ENCODE measurements at regions of chr2 and their contacts with region 1.

Region 1: DNA sequence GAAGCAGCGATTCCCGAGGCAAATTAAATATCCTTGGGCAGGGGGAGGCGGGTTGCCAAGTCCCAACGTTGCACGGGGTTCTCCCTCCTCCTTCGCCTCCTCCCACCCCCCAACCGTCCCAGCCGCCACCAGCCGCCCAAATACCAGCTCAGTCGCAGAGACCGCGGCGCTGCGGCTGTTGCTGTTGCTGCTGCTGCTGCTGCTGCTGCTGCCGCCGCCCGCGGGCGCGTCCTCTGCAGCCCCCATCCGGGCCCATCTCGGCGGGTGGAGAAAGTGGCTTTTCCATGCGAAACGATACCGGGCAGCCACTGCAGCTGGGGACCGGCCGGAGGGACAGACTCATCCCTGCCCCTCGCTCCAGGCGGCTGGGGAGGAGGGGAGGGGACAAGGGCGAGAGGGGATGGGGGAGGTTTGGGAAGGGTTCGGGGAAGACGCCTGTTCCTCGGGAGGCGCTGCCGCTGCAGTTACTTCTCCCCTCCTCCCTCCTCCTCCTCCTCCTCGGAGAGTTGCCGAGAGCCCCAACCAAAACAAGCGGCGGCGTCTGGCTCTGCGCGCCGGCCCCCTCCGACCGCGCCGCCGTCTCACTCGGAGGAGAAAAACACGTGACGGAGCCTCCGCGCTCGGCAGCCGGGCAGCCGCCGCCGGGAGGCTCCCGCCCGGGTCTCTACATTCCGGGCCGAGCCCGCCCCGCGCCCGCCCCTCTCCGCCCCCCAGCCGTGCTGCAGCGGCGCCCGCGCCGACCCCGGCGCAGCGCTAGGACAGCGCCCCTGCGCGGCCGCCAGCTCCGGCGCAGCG is at the start of gene IRS1:
- DNase-seq: peak; percentile 88
- H3K4me3 Mint-ChIP-seq: peak within 1 kb of the TSS; percentile 81
- H3K27ac Mint-ChIP-seq: peak within 1 kb of the TSS; percentile 72
- H3K4me1 Mint-ChIP-seq: peaks cover 30% of the 10 kb centered on the region
- H3K27me3 Mint-ChIP-seq: peaks cover 10% of the 10 kb centered on the region
- total RNA-seq, gene IRS1: 4.7 and 4.8 TPM in 2 replicates

Region 2: GRCh38 chr2:225889446-225889850 is 909.9 kb before region 1 on chr2:
- intact Hi-C with region 1: loop called (anchors 1 kb)
- DNase-seq: no peak
- H3K4me3 Mint-ChIP-seq: no peak overlapping the region
- H3K27ac Mint-ChIP-seq: no peak overlapping the region
- H3K4me1 Mint-ChIP-seq: no peaks in the 10 kb centered on the region
- H3K27me3 Mint-ChIP-seq: peaks cover 4% of the 10 kb centered on the region

Region 3: DNA sequence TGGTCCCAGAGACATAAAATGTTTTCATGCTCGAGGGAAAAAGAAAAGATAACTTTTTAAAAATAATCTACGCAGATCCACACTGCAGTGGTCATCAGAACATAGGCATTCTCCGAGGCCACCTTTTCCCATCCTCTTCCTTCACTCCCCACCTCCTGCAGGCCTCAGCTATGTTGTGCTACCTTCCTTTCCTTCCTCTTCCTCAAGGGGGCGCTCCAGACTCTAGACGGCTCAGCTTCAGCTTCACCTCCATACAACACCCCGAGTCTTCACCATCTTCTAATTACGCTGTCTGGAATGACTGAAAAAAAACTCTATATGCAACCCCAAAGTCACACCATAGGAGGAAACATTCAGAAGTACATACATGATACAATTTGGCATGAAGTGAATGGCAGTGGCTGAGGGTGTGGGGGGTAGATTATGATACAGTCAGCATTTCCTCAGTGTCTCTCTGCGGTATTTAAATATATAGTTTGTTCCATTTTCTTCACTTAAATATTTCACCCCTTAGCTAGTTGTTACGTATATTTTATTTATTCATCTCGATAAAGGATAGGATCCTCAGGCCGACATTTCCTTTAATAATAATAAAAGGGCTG is 583.4 kb before region 1 on chr2:
- intact Hi-C with region 1: loop called (anchors 1 kb)
- DNase-seq: peak; percentile 89
- H3K4me3 Mint-ChIP-seq: no peak overlapping the region
- H3K27ac Mint-ChIP-seq: no peak overlapping the region
- H3K4me1 Mint-ChIP-seq: peaks cover 4% of the 10 kb centered on the region
- H3K27me3 Mint-ChIP-seq: peaks cover 7% of the 10 kb centered on the region

Region 4: DNA sequence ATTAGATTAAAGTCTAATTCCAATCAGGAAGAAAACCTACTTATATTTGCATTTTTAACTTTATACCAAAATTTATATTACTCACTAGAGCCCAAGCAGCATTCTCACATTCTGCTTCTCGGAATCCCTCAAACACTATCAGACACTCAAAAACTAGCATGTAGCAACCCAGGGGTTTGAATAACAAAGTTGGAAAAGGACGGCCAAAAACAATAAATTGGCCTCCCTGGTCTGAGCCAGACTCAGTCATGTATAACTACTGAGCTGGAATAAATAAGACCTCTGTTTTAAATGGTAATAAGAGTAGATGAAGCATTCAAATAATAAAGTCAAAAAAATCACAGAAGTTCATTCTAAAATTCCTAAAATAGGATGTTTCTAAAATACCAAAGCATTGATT is 290.7 kb before region 1 on chr2:
- intact Hi-C with region 1: loop called (anchors 10 kb)
- DNase-seq: no peak
- H3K4me3 Mint-ChIP-seq: no peak overlapping the region
- H3K27ac Mint-ChIP-seq: no peak overlapping the region
- H3K4me1 Mint-ChIP-seq: no peaks in the 10 kb centered on the region
- H3K27me3 Mint-ChIP-seq: peaks cover 4% of the 10 kb centered on the region

Region 5: DNA sequence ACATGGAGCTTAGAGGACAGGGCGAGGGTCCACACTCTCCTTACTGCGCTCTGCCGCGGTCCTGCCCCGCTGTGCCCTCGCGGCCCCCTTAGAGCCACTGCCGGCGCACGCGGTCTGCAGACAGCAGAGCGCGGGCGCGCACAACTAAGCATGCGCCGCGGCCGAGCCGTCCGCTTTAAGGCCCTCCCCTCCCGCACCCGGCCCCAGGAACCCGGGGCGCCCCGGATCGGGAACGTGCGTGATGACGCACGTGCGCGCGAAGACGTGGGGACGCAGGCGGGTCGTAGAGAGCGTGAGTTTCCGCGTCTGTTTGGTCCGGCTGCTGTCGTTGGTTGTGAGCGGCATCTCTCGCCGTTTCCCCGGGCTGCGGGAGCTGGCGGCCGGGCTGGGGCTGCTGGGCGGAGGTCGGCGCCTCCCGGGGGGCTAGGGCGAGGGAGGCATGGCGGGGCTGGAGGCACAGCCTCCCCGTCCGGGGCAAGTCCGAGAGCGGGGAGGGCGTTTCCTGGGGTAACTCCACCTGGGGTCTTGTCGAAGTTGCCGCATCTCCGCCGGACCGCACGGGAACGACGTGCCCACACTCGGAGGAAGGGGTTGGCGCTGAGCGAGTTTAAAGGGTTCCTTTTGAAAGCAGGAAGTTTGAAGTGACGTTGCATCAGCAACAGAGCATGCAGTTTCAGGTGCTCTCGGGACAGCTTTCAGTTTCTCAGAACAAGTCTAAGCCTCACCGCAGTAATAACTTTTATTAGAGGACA is 36.6 kb after region 1 on chr2 and contains the start of gene RHBDD1:
- intact Hi-C with region 1: loop called (anchors 1 kb)
- DNase-seq: peak; percentile 98
- H3K4me3 Mint-ChIP-seq: peak within 1 kb of the TSS; percentile 95
- H3K27ac Mint-ChIP-seq: peak within 1 kb of the TSS; percentile 97
- H3K4me1 Mint-ChIP-seq: peaks cover 54% of the 10 kb centered on the region
- H3K27me3 Mint-ChIP-seq: no peaks in the 10 kb centered on the region
- total RNA-seq, gene RHBDD1: 41.3 and 44.7 TPM in 2 replicates

Region 6: DNA sequence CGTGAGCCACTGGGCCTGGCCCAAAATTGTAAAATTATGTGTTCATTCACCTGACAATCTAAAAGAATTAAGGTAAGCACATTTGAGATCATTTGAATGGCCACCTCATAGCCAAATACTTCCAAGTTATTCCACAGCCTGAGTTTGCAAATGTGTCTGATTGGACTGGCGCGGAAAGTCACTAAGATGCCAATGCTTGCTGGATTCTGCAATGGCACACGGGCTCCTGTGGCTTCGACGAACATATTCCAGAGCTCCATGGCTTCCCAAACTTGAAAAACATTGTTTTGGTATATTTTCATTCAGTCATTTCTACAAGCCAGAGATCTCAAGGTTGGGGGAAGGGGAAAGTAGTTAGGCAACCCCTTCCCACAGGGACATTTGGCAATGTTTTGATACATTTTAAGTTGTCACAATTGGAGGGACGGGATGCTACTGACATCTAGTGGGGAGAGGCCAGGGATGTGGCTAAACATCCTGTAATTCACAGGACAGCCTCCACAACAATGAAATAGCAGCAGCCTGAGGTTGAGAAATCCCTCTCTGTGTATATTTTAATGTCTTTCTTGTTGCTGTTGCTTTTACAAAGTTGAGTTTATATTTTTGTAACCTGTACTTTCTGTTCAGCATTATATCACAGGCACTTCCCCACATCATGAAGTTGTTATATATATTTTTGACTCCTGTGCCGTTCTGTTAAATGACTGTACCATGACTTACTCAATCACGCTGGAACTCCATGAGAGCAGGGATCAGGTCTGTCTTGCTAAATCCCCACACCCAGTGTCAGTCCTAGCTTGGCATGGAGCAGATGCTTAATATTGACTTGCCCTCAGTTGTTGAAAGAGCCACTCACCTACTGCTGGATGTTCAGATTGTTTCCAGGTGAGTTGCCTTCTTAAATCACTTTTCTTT is 307.7 kb after region 1 on chr2:
- intact Hi-C with region 1: loop called (anchors 5 kb)
- DNase-seq: peak; percentile 77
- H3K4me3 Mint-ChIP-seq: no peak overlapping the region
- H3K27ac Mint-ChIP-seq: no peak overlapping the region
- H3K4me1 Mint-ChIP-seq: no peaks in the 10 kb centered on the region
- H3K27me3 Mint-ChIP-seq: peaks cover 3% of the 10 kb centered on the region

Region 7: DNA sequence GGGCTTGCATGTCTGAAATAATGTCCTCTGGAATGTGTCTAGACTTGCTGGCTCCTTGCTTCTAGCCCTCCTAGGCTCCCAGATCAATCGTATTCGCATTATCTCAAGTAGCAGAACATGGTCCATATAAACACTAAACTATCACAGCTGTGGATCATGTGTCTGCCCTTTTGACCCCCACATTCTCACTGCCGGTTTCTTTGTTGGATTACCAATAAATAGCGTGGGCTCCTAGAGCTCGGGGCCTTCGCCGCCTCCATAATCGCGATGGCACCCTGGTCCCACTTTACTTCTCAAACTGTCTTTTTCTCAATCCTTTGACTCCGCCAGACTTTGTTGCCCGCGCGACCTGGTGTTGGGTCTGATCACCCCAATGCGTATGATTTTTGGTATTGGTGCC is 940.0 kb after region 1 on chr2:
- intact Hi-C with region 1: no loop called
- DNase-seq: no peak
- H3K4me3 Mint-ChIP-seq: no peak overlapping the region
- H3K27ac Mint-ChIP-seq: no peak overlapping the region
- H3K4me1 Mint-ChIP-seq: no peaks in the 10 kb centered on the region
- H3K27me3 Mint-ChIP-seq: no peaks in the 10 kb centered on the region